Kidney (tissue), 22 donors: ENCODE measurements at regions of chr21 and their contacts with region 1.

Region 1: GRCh38 chr21:41283211-41283818 is 33.3 kb upstream of the FAM3B start:
- DNase-seq: peak in 3 of 5 donors; percentile 56 to 93 (median 87)
- H3K4me3 ChIP-seq: no peak overlapping the region
- H3K27ac ChIP-seq: no peak overlapping the region
- H3K4me1 ChIP-seq: no peaks in the 10 kb centered on the region
- H3K27me3 ChIP-seq: no peaks in the 10 kb centered on the region
- CTCF ChIP-seq: peak; percentile 84

Region 2: DNA sequence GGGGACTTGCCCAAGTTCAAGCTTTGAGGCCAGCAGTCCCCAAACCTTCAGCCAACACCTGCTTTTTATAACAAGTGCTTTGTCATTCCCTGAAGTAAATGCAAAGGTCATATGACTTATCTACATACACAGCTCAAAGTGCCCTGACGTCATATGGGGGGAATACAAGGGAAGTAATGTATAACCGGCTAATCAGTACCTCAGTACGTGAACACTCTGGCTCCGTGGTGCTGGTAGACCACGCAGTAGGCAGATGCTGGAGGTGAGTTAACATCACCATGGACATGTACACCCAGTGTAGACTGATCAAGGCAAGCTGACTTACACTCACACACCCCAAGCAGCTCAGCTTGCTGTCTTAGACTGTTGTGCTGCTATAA is 55.3 kb before region 1 on chr21:
- intact Hi-C with region 1: no loop called
- DNase-seq: no peak
- H3K4me3 ChIP-seq: no peak overlapping the region
- H3K27ac ChIP-seq: no peak overlapping the region
- H3K4me1 ChIP-seq: no peaks in the 10 kb centered on the region
- H3K27me3 ChIP-seq: no peaks in the 10 kb centered on the region
- CTCF ChIP-seq: no peak

Region 3: GRCh38 chr21:41459884-41460534 is 176.7 kb after region 1 on chr21:
- intact Hi-C with region 1: loop called (anchors 10 kb)
- DNase-seq: no peak
- H3K4me3 ChIP-seq: no peak overlapping the region
- H3K27ac ChIP-seq: no peak overlapping the region
- H3K4me1 ChIP-seq: peaks cover 0 to 3% (median 0%) of the 10 kb centered on the region in 3 donors
- H3K27me3 ChIP-seq: no peaks in the 10 kb centered on the region
- CTCF ChIP-seq: no peak